Mammary epithelial cell (primary cell): ENCODE measurements at regions of chr14 and their contacts with region 1.

Region 1: DNA sequence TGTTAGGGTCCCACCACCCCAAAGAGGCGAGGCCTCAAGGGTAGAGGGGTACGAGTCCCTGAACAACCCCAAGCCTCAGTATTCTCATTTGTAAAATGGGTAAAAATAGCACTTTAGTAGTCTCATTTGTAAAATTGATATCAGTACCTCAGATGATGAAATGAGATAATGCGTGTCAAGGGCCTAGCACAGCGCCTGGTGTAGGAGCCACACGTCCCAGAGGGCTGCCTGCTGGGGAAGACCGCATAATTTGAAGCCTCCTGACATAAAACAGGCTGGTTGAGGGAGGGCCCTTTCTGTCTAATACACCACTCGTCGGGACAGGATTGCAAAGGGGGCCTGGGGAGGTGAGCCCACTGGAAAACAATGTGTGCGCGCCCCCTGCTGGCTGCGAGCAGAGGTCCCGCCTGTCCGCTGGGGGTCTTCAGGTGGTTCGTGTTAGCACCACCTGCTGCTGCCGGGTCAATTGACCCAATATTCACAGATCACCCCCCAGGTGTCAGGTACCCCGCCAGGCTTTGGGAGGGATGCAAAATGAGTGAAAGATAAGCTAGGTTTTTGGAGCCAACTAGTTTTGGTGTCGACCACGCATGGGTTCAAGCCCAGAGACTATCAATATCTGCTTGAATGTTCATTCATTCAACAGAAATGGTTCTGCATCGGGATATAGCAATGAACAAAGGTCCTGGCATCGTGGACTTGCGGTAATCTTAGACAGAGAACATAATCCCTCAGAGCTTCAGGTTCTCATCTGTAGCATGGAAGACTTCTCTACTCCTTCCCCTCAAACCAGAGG is 24.7 kb upstream of the IRF2BPL start:
- DNase-seq: no peak
- H3K4me3 ChIP-seq: no peak overlapping the region
- H3K27ac ChIP-seq: no peak overlapping the region
- H3K4me1 ChIP-seq: peaks cover 14% of the 10 kb centered on the region
- H3K27me3 ChIP-seq: no peaks in the 10 kb centered on the region
- CTCF ChIP-seq: peak; percentile 65 to 88

Region 2: DNA sequence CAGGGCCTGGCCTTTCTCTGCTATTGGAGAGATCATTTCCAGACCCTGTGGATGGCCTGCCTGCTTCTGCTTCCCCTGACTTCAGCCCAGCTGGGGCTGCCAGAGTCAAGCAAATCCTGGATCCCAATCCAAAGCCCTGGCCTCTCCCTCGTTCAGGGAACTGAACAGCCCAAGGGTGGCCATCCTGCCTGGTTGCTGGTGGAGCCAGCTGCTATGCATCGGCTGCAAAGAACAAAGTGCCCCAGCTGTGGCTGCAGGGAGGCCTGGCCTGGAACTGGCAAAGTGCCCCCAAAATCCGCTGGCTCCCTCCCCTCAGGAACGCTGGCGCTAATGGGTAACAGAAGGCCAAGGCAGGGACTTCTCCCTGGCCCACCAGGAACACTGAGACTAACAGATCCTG is 170.6 kb before region 1 on chr14:
- CTCF ChIA-PET with region 1: no interaction called
- dilution Hi-C with region 1: loop called (anchors 10 kb)
- in situ Hi-C with region 1: no loop called
- intact Hi-C with region 1: no loop called
- DNase-seq: no peak
- H3K4me3 ChIP-seq: no peak overlapping the region
- H3K27ac ChIP-seq: no peak overlapping the region
- H3K4me1 ChIP-seq: no peaks in the 10 kb centered on the region
- H3K27me3 ChIP-seq: no peaks in the 10 kb centered on the region
- CTCF ChIP-seq: no peak

Region 3: DNA sequence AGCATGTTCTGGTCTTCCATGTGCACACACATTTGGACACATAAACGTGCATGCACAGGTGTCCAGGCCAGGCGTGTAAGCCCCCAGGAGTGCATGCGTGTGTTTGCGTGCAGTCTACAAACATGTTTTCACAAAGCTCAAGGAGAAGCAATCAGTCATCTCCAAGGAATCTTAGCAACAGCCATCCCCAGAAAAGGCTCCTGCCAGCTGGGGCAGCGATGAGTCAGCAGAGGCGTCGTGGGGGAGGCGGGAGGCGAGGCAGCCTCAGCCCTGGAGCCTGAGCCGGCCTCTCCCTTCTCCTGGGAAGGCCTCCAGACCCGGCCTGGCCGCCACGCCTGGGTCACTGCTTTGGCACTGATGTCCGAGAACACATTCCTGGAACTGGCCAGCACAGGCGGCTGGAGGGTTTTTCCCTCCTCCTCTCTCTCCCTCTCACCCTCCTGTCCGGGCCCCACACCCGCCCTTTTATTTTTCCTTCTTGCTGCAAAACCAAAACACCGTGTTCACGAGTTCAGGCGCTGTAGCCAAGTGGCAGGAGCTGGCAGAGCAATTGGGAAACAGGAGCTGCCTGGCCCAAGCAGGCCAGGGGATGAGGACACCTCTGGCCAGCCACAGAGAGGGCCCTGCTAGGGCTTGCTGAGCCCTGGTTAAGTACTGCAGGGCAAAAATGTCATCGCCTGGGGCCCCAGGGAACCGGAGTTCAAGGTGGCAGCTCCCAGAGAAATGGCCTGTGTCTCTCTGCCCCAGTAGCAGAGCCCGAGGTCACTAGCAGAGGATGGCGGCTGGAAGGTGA is 134.3 kb before region 1 on chr14:
- CTCF ChIA-PET with region 1: no interaction called
- dilution Hi-C with region 1: no loop called
- in situ Hi-C with region 1: loop called in 1 of 2 experiments (anchors 5 kb)
- intact Hi-C with region 1: loop called (anchors 1 kb)
- DNase-seq: peak; percentile 96
- H3K4me3 ChIP-seq: no peak overlapping the region
- H3K27ac ChIP-seq: peak overlapping the region; percentile 88
- H3K4me1 ChIP-seq: peaks cover 44% of the 10 kb centered on the region
- H3K27me3 ChIP-seq: no peaks in the 10 kb centered on the region
- CTCF ChIP-seq: peak in 1 of 2 donors; percentile 28

Region 4: DNA sequence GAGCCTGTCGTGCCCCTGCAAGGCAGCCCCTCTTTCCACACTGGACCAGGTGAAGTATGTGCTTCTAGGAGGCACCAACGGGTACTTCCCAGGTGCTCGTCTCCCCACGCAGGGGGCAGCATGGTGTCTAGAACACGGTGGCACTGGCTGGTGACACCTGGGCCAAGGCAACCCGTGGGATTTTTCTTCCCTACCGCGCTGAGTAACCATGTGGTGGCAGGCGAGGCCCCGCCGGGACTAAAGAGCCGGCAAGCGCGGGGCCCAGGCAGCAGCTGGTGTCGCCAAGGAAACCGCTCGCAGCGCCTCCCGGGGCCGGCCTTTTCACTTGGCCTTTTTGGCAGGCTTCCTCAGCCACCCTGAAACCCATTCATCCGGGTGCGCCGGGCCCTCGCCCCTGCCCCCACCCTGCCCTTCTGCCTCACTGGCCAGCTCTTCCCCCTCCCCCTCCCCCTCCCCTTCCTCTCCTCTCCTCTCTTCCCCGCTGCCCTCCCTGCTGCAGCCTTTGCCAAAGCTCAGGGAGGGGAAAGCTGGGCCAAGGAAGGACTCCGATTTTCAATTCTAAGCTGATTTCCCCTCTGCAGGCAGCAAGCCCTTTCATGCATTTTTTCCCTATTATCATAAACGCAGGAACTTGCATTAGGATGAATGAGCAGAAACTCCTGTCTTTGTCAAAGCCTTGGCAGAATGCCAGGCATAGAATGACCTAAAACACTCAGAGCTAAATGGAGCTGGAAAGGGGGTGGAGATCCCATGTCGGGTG is 106.0 kb before region 1 on chr14:
- CTCF ChIA-PET with region 1: no interaction called
- dilution Hi-C with region 1: loop called (anchors 10 kb)
- in situ Hi-C with region 1: no loop called
- intact Hi-C with region 1: loop called (anchors 1 kb)
- DNase-seq: peak; percentile 83
- H3K4me3 ChIP-seq: no peak overlapping the region
- H3K27ac ChIP-seq: peak overlapping the region; percentile 58
- H3K4me1 ChIP-seq: peaks cover 45% of the 10 kb centered on the region
- H3K27me3 ChIP-seq: no peaks in the 10 kb centered on the region
- CTCF ChIP-seq: peak; percentile 16 to 74

Region 5: DNA sequence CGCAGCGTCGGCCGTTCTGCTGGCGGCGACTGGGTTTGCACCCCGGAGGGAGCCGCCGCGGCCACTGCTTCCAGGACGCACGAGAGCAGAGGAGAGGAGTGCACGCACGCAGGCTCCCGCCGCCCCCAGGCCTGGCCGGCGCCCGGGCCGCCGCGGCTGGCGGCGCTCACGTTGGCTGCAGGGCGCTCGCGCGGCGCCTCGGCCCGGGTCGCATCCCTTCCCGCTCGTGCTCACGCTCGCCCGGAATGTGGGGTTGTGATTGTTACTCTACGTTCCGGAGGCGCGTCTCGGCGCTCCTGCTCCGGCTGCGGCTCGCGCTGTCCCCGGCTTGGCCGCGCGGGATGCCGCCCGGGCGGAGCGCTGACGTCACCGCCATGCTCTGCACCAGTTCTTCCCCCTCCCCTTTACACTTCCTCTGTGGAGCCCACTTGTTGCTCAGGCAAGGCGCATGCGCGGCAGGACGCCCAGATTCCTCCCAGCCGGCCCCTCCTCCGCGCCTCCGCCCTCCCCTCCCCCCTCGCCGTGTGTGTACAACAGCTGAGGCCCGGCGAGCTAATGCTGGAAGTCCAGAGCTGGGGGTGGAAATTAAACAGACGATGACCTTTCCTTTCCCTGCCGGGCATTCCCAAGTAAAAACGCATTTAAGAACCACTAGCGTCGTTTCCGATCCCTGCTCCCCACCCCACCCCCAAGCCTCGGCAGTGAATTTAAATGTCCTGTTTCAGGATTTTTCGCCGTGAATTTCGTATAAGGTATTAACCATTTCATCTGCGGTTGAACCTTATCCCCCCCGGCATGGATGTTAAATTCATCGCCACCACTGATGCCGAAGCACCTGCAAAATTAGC is 24.6 kb before region 1 on chr14 and contains the start of gene IRF2BPL:
- CTCF ChIA-PET with region 1: interaction called, 3 read pairs
- dilution Hi-C with region 1: no loop called
- in situ Hi-C with region 1: no loop called
- intact Hi-C with region 1: loop called (anchors 1 kb)
- DNase-seq: peak; percentile 96
- H3K4me3 ChIP-seq: peak within 1 kb of the TSS; percentile 56 to 88 (median 79)
- H3K27ac ChIP-seq: peak within 1 kb of the TSS; percentile 81
- H3K4me1 ChIP-seq: peaks cover 48% of the 10 kb centered on the region
- H3K27me3 ChIP-seq: no peaks in the 10 kb centered on the region
- CTCF ChIP-seq: no peak
- total RNA-seq, gene IRF2BPL: 41.3 to 49.4 TPM

Region 6: DNA sequence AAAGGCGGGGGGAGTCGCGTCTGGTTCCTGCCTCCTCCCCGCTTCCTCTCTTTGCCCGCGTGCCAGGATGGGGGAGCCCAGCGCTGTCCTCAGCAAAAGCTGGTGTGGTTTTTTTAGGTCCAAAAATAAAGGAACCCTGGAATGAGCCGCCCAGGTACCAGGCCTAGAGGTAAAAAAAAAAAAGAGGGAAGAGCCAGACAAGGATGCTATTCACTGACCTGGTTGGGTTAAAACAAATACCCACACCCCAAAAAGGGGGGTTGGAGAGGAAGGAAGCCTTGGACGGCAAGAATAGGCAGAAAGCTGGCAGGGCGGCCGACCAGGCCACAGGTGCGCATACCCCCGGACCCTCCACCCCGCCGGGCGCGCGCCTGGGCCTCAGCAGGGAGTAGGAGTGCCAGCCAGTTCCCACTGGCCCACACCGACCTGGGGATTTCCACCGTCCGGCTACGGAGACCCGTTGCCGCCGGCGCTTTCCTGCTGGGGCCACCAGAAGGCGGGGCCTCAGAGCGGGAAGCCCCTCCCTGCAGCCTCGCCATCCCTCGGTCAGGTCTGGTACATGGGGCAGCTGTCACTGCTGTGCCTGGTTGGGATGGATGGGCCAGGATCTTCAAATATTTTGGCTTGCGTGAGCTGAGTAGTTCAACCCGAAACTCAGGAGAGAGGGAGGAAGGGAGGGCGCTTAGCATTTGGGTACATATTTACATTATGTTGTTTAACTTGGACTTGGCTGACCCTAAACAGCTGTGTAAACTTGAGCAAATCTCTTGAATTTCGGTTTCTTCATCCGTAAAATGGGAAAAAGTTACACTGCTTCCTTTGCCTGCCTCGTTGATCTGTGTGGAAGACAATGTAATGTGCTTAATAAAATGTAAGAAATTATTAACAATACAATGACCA is 19.4 kb before region 1 on chr14:
- CTCF ChIA-PET with region 1: no interaction called
- dilution Hi-C with region 1: no loop called
- in situ Hi-C with region 1: no loop called
- intact Hi-C with region 1: loop called (anchors 1 kb)
- DNase-seq: peak; percentile 92
- H3K4me3 ChIP-seq: peak overlapping the region; percentile 41 to 56 (median 44)
- H3K27ac ChIP-seq: peak overlapping the region; percentile 97
- H3K4me1 ChIP-seq: peaks cover 62% of the 10 kb centered on the region
- H3K27me3 ChIP-seq: no peaks in the 10 kb centered on the region
- CTCF ChIP-seq: no peak

Region 7: GRCh38 chr14:77076113-77076631 is 22.9 kb after region 1 on chr14:
- CTCF ChIA-PET with region 1: interaction called, 11 read pairs
- dilution Hi-C with region 1: no loop called
- in situ Hi-C with region 1: no loop called
- intact Hi-C with region 1: no loop called
- DNase-seq: no peak
- H3K4me3 ChIP-seq: no peak overlapping the region
- H3K27ac ChIP-seq: no peak overlapping the region
- H3K4me1 ChIP-seq: peaks cover 16% of the 10 kb centered on the region
- H3K27me3 ChIP-seq: no peaks in the 10 kb centered on the region
- CTCF ChIP-seq: no peak